ENCODE measurements at regions of chrX and their contacts with region 1.

Region 1: GRCh38 chrX:70262952-70263567 is 3.1 kb upstream of the P2RY4 start:
- H3K4me3 ChIP-seq: no peak overlapping the region
- H3K27ac ChIP-seq: no peak overlapping the region
- H3K4me1 ChIP-seq: no peaks in the 10 kb centered on the region
- CTCF ChIP-seq: peak; percentile 59; the same call in 1 of the 2 replicates

Region 2: DNA sequence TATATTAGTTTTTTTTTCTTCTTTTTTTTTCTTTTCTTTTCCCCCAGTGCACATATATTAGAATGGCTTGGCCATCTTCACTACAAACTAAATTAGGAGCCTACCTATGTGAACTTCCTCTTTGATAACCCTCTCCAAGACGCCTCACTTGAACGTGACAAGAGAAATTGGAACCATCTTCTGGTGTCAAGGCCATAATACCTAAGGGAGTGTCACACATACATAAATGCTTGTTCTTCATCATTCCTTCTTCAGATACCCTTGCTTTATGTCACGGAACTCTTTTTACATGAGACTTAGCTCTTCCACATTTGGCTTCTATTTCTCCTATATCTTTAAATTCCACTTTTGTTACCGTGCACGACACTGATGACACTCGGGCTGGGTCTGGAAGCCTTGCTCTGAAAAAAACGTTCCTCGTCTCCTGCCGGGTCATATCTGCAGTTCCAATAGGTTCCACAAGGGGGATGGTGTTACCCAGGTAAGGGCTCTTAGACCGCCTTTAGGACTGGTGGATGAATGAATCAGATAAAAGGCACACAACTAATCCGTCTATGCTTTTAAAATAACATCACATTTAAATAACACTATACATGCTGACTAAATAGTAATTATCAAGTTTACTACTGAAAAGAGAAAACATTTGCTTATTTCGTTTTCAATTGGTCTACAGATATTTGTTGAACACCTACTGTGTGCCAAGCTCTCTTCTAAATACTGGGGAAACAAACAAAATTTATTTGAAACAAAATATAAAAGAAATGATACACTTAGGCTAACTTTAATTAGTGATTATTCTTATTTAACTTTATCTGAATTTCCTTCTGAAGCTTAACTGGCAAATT is 65.9 kb before region 1 on chrX:
- CTCF ChIA-PET with region 1: interaction called, 16 read pairs
- POLR2A ChIA-PET with region 1: no interaction called
- H3K4me3 ChIP-seq: no peak overlapping the region
- H3K27ac ChIP-seq: no peak overlapping the region
- H3K4me1 ChIP-seq: no peaks in the 10 kb centered on the region
- CTCF ChIP-seq: no peak

Region 3: DNA sequence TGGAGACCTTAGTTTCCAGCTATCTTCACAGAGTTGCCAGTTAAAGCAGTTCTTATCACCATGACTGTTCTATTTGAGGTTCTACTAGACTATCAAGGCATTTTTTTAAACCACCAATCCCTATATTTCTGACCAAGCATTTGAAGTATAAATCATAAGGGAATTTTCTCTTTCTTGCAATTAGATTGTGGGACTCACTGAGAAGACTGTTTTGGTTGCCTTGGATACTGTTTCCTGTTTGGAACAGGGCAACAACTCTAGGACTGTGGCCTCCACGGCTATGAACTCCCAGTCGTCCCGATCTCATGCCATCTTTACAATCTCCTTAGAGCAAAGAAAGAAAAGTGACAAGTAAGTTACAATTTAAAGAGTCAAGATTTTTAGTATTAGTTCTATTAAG is 38.7 kb after region 1 on chrX:
- CTCF ChIA-PET with region 1: no interaction called
- POLR2A ChIA-PET with region 1: no interaction called
- H3K4me3 ChIP-seq: no peak overlapping the region
- H3K27ac ChIP-seq: no peak overlapping the region
- H3K4me1 ChIP-seq: no peaks in the 10 kb centered on the region
- CTCF ChIP-seq: no peak

Measured in HEK293 (cell line).